Activated T-helper 1 cell treated with anti-CD3 and anti-CD28 coated beads, Interleukin-12 subunit alpha, Interleukin-12 subunit beta, Interleukin-2, Interleukin-4 antibody, amounts not matched to agents 30 ng/mL and 10 ng/mL and 1 ng/mL, durations not matched to agents 14 hours and 24 hours and 36 hours (primary cell): ENCODE measurements at regions of chr5 and their contacts with region 1.

Region 1: DNA sequence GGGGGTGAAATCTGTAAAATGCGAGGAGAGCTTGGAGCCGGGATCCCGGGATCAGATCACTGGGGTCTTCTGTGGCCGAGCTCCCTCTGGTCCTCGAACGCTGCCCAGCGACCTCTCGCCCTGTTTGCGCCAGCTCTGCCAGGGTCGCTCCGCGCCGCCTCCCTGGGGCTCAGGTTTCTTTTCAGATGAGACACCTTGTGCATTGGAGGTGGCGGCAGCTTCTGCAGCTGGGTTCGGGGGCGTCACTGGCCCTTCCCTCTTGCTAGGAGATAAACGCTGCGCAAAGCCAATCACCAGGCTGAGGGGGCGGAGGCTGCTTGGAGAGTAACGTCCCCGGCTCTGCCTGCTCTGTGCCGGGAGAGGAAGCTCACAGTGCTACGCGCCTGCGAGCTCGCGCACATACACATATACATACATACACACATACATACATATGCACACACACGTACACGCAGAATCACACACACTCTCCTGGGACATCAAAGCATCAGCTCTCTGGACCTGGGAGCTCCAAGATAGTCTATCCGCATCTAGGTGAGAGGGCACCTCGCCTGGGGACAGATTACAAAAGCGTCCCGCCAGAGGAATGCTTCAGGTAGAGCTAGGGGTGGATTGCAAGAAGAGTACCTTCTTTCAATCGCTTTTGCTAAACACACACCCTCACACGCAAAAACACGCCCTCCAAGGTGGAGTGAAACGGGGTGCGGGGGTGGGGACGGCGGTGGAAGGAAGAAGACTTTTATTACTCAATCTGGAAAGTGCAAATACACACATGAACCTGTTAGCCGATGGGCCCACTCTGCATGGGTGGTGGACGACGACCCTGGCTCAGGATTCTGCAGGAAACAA is at the start of gene ST8SIA4:
- DNase-seq: peak; percentile 90
- H3K4me3 Mint-ChIP-seq: peak within 1 kb of the TSS; percentile 96
- H3K27ac Mint-ChIP-seq: peak within 1 kb of the TSS; percentile 99
- H3K4me1 Mint-ChIP-seq: peaks cover 41% of the 10 kb centered on the region
- H3K27me3 Mint-ChIP-seq: no peaks in the 10 kb centered on the region
- total RNA-seq, gene ST8SIA4: 63.1 and 65.2 TPM in 2 replicates

Region 2: GRCh38 chr5:98928873-98929696 is 1974.2 kb before region 1 on chr5 and contains the start of gene CHD1:
- intact Hi-C with region 1: loop called (anchors 2 kb)
- DNase-seq: peak; percentile 93
- H3K4me3 Mint-ChIP-seq: peak within 1 kb of the TSS; percentile 98
- H3K27ac Mint-ChIP-seq: peak within 1 kb of the TSS; percentile 99
- H3K4me1 Mint-ChIP-seq: peaks cover 71% of the 10 kb centered on the region
- H3K27me3 Mint-ChIP-seq: no peaks in the 10 kb centered on the region
- total RNA-seq, gene CHD1: 83.0 and 83.3 TPM in 2 replicates

Region 3: DNA sequence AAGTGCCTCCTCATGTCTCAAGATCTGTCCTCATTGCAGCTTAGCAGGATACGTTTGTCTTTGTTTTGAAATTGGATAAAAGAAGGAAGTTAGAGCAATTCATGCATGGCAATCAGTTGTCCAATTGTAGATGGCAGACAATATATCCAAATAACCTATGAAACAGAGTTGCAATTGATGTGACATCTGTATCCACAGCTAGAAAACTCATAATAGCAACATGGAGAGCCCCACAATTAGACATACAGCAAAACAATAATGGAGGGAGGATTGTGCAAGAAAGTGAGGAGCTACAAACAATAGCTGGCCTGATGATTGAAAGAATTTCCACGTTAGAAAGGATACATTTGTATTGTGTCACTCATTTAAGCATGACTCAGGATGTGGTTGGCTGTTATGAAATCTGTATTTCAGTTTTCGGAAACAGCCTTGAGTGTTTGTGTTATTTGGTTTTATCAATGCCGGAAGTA is 236.1 kb before region 1 on chr5:
- intact Hi-C with region 1: loop called (anchors 2 kb)
- DNase-seq: no peak
- H3K4me3 Mint-ChIP-seq: no peak overlapping the region
- H3K27ac Mint-ChIP-seq: peak overlapping the region; percentile 11
- H3K4me1 Mint-ChIP-seq: peaks cover 19% of the 10 kb centered on the region
- H3K27me3 Mint-ChIP-seq: peaks cover 2% of the 10 kb centered on the region

Region 4: DNA sequence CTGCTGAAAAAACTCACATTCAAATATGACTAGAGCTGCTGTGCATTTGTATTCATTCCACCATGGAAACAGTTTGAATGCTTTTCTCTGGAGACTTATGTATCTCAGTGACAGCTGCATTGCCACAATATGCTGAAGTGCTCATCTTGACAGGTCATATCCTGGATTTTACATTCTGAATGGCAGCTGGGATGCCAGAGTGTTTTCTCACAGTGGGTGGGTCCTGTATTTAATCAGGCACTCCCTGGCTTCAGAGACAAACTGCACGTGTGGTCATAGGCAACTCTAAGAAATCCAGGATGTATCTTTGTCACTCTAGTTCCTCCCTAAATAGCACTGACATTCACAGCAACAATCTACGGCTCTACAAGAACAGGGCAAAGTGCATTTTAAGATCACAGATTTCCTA is 75.8 kb before region 1 on chr5:
- intact Hi-C with region 1: loop called (anchors 1 kb)
- DNase-seq: no peak
- H3K4me3 Mint-ChIP-seq: no peak overlapping the region
- H3K27ac Mint-ChIP-seq: peak overlapping the region; percentile 31
- H3K4me1 Mint-ChIP-seq: peaks cover 36% of the 10 kb centered on the region
- H3K27me3 Mint-ChIP-seq: no peaks in the 10 kb centered on the region

Region 5: GRCh38 chr5:100861148-100861547 is 42.1 kb before region 1 on chr5:
- intact Hi-C with region 1: loop called (anchors 1 kb)
- DNase-seq: no peak
- H3K4me3 Mint-ChIP-seq: peak overlapping the region; percentile 77
- H3K27ac Mint-ChIP-seq: peak overlapping the region; percentile 97
- H3K4me1 Mint-ChIP-seq: peaks cover 64% of the 10 kb centered on the region
- H3K27me3 Mint-ChIP-seq: no peaks in the 10 kb centered on the region

Region 6: DNA sequence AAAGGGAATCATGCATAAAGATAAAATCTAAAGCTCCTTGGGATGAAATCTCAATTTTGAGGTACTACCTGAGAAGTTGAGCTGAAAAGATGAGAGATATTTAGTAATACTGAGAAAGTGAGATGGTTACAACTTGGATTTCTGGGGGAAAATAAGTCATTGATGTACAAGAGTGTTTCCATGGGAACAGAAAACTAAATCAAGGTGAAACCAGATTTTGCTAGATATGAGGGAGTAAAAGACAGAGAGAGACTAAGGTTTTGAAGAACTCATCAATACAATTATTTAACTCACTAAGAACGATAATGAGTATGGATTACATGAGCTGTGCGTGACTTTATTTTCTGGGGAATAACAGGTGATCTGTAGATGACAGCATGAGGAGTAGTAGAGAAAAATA is 10.0 kb after region 1 on chr5:
- intact Hi-C with region 1: loop called (anchors 1 kb)
- DNase-seq: no peak
- H3K4me3 Mint-ChIP-seq: no peak overlapping the region
- H3K27ac Mint-ChIP-seq: peak overlapping the region; percentile 21
- H3K4me1 Mint-ChIP-seq: peaks cover 23% of the 10 kb centered on the region
- H3K27me3 Mint-ChIP-seq: no peaks in the 10 kb centered on the region